CD4-positive, alpha-beta T cell (primary cell): ENCODE measurements at regions of chr16 and their contacts with region 1.

Region 1: DNA sequence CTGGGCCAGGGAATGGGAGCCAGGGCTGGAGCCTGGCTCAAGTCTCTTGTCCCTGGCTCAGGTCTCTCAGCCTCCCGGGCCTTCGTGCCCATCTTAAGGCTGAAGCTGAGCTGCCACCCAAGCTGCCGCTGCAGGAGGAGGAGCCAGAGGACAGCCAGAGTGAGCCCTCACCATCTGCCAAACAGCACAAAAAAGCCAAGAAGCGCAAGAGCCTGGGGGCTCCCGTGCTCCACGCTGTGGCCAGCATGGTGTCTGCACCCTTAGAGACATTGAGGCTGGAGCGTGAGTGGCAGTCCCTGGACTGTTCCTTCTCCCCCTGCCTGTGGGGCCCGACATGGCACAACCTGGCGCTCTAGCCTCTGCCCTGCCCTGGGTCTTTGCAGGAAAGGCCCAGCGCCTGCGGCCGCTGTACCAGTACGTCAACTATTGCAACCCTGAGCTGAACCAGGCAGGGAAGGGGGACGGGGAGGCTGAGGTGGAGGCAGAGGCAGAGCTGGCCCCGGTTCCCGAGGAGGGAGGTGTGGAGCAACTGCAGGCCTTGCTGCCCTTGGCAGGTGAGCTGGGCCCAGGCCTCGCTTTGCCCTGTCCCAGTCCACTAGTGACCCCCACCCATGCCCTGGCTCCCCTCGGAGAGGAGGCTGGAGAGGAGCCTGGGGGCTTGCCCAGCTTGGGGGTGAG is 1.3 kb downstream of the C16orf86 start:
- DNase-seq: peak; percentile 71 to 94 (median 81)
- ATAC-seq: peak; percentile 91
- H3K4me3 ChIP-seq: peak overlapping the region; percentile 65
- H3K4me3 Mint-ChIP-seq: peak overlapping the region; percentile 90
- H3K27ac ChIP-seq: peak overlapping the region; percentile 28 to 44
- H3K27ac Mint-ChIP-seq: peak overlapping the region; percentile 55
- H3K4me1 ChIP-seq: peaks cover 36% of the 10 kb centered on the region
- H3K4me1 Mint-ChIP-seq: peaks cover 28% of the 10 kb centered on the region
- H3K27me3 ChIP-seq: no peaks in the 10 kb centered on the region
- H3K27me3 Mint-ChIP-seq: no peaks in the 10 kb centered on the region
- CTCF ChIP-seq: peak; percentile 74

Region 2: DNA sequence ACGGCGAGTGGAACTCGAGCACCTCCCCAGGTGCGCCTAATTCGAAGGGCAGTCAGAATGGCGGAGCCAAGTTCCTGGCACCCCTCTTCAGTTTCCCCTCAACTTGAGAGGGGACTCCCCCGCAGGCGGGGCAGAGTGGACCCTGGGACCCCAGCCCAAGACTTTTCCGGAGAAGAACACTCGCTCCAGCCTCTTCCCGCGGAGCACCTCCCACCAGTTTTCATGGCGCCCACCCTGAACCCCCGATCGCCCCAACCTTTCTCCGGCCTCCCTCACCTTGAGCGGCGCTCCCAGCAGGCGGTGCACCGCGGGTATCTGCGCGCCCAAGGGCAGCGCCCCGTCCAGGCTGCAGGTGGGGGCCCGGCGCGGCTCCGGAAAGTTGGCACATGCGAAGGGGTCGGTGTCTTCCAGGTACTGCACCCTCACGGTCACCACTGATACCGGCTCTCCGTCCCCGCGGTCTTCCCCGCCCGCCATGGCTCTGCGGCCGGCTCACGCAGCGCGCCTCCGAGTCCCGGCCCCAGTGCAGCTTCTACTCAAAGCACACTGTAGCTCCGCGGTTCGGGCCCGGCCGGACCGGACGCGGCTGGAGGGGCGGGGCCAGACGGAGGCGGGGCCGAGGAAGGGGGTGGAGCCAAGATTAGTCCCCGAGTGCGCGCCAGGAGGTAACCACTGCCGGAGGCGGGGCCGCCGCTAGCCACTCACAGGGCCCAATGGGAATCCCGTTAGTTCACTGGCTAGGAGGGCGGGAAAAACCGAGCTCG is 420.8 kb before region 1 on chr16 and contains the start of gene FHOD1:
- CTCF ChIA-PET with region 1: no interaction called
- POLR2A ChIA-PET with region 1: no interaction called
- intact Hi-C with region 1: no loop called
- DNase-seq: peak; percentile 86 to 99 (median 96)
- ATAC-seq: peak; percentile 74
- H3K4me3 ChIP-seq: peak within 1 kb of the TSS; percentile 87
- H3K4me3 Mint-ChIP-seq: peak within 1 kb of the TSS; percentile 97
- H3K27ac ChIP-seq: peak within 1 kb of the TSS; percentile 65 to 74
- H3K27ac Mint-ChIP-seq: peak within 1 kb of the TSS; percentile 68
- H3K4me1 ChIP-seq: peaks cover 72% of the 10 kb centered on the region
- H3K4me1 Mint-ChIP-seq: peaks cover 42% of the 10 kb centered on the region
- H3K27me3 ChIP-seq: peaks cover 0 to 6% of the 10 kb centered on the region in 2 experiments
- H3K27me3 Mint-ChIP-seq: peaks cover 13% of the 10 kb centered on the region
- CTCF ChIP-seq: no peak
- total RNA-seq, gene FHOD1: 21.1 to 26.0 TPM

Region 3: DNA sequence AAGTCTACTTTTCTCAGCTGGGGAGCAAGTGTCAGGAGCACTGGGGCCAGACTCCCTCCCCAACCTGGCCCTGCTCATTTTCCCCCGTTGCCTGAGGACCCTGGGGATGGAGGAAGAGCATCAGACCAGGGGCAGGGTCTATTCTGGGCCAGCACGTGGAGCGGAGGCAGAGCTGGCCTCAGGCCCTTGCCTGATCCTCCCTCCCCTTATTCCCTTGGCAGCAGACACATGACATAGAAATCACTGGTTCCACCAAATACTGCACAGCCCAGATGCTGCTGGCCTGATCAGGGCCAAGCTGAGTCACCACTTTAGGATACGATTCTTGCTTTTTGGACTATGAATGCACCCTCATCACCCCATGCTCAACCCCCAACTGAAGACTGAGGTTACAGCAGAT is 168.8 kb before region 1 on chr16:
- CTCF ChIA-PET with region 1: no interaction called
- POLR2A ChIA-PET with region 1: no interaction called
- intact Hi-C with region 1: loop called in 1 of 2 experiments (anchors 1 kb)
- DNase-seq: no peak
- ATAC-seq: no peak
- H3K4me3 ChIP-seq: no peak overlapping the region
- H3K4me3 Mint-ChIP-seq: no peak overlapping the region
- H3K27ac ChIP-seq: no peak overlapping the region
- H3K27ac Mint-ChIP-seq: peak overlapping the region; percentile 32
- H3K4me1 ChIP-seq: peaks cover 14% of the 10 kb centered on the region
- H3K4me1 Mint-ChIP-seq: peaks cover 15% of the 10 kb centered on the region
- H3K27me3 ChIP-seq: no peaks in the 10 kb centered on the region
- H3K27me3 Mint-ChIP-seq: no peaks in the 10 kb centered on the region
- CTCF ChIP-seq: no peak

Region 4: DNA sequence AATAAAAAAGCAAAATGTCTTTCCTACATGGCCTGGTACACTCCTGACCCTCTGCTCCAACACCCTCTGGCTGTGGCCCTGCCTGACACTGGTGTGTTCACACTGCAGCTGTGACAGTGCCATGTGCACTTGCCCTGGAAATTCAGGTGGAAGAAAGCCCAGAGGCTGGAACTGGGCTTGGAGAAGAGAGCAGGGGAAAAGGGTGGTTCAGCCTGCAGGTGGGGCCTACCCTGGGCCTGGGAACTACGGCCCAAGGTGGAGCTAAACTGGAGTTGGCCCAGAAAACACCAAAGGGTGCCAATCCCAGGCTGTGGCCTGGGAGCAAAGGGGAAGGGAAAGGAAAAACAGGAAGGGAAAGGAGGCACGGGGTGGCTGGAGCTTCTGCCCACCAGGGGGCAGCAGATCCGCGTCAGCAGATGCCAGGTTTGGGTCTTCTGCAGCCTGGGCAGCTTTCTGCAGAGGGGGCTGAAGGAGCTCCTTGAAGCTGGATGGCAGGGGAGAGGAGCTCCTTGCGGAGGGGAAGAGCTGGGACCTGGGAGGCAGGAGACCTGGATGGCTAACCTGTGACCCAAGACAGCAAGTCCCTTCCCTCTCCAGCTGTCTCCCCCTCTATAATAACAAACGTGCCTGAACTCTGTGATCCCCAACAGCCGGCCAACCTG is 121.1 kb before region 1 on chr16:
- CTCF ChIA-PET with region 1: interaction called, 17 read pairs
- POLR2A ChIA-PET with region 1: interaction called, 26 read pairs
- intact Hi-C with region 1: loop called (anchors 1 to 2 kb)
- DNase-seq: peak; percentile 61 to 88 (median 72)
- ATAC-seq: peak; percentile 22
- H3K4me3 ChIP-seq: peak overlapping the region; percentile 44
- H3K4me3 Mint-ChIP-seq: peak overlapping the region; percentile 72
- H3K27ac ChIP-seq: peak overlapping the region; percentile 72 to 76
- H3K27ac Mint-ChIP-seq: peak overlapping the region; percentile 92
- H3K4me1 ChIP-seq: peaks cover 51% of the 10 kb centered on the region
- H3K4me1 Mint-ChIP-seq: peaks cover 50% of the 10 kb centered on the region
- H3K27me3 ChIP-seq: no peaks in the 10 kb centered on the region
- H3K27me3 Mint-ChIP-seq: no peaks in the 10 kb centered on the region
- CTCF ChIP-seq: peak; percentile 99

Region 5: DNA sequence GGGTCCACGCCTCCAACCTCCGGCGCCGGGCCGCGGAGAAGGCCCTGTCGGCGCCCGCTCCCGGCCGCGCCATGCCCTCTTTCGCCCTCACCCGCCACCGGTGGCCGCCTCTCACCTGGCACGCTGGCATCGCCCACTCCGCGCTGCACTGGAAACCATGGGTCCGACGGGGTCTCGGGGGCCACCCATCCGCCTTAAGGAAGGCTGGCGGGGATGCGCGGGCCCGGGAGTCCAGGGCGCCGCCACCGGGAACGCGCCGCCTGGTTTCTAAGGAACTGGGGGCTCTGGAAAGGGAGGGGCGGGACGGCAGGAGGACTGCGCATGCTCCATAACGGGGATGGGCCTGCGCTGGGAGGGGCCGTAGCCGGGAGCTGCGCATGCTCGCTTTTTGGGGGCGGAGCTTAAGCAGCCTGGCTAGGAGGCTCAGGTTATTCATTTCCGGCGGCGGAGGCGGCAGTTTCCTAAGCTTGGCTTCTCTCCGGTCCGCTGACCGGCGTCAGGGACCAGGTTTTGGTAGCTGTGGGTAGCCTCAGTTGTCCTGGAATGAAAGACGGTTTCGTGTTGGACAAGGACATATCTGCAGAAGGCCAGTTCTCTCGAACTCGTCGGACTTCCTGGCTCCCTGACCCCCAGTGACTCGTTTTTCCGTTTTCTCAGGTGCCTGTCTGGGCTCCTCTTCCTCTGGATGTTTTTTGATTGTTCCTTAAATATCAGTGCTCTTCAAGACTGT is 51.3 kb after region 1 on chr16 and contains the start of gene GFOD2:
- CTCF ChIA-PET with region 1: interaction called, 5 read pairs
- POLR2A ChIA-PET with region 1: interaction called, 4 read pairs
- intact Hi-C with region 1: loop called in 1 of 2 experiments (anchors 2 kb)
- DNase-seq: peak; percentile 96 to 100 (median 98)
- ATAC-seq: peak; percentile 94
- H3K4me3 ChIP-seq: peak within 1 kb of the TSS; percentile 76
- H3K4me3 Mint-ChIP-seq: peak within 1 kb of the TSS; percentile 97
- H3K27ac ChIP-seq: peak within 1 kb of the TSS; percentile 81 to 93
- H3K27ac Mint-ChIP-seq: peak within 1 kb of the TSS; percentile 93
- H3K4me1 ChIP-seq: peaks cover 26% of the 10 kb centered on the region
- H3K4me1 Mint-ChIP-seq: peaks cover 42% of the 10 kb centered on the region
- H3K27me3 ChIP-seq: no peaks in the 10 kb centered on the region
- H3K27me3 Mint-ChIP-seq: no peaks in the 10 kb centered on the region
- CTCF ChIP-seq: no peak
- total RNA-seq, gene GFOD2: 2.8 to 3.7 TPM

Region 6: DNA sequence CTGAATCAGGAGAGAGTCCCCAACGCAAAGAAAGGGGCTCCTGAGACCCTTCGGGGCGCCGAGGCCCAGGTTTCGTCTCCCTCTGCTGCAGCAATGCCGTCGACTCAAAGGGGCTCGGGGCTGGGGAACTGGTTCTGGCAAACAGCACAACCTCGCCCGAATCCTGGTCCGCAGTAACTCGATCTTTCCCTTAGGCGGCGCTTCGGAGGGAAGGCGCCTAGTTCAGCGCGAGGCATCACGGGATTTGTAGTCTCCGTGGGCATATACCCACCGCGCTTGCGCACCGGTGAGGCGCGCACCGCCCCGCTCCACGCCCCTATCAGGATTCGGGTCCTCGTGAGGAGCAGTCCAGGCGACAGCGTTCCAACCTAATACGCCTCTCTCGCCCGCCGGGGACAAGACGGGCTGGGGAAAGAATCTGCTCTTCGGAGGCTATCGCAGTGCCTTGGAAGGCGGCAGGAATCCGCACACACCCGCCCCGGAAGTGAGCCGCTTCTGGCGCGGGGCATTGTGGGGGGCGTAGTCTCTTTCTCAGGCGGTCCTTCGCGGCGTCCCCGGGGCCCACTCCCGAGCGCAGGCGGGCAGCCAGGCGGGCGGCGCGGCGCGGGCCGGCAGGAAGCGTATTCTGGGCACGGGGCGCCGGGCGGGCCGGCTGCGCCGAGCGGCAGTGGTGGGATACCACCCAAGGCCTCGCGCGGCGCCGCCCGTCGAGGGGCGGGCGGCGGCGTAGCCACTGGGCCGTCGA is 174.0 kb after region 1 on chr16 and contains the start of gene THAP11:
- CTCF ChIA-PET with region 1: no interaction called
- POLR2A ChIA-PET with region 1: no interaction called
- intact Hi-C with region 1: loop called in 1 of 2 experiments (anchors 5 kb)
- DNase-seq: peak; percentile 90 to 97 (median 94)
- ATAC-seq: peak; percentile 55
- H3K4me3 ChIP-seq: peak within 1 kb of the TSS; percentile 96
- H3K4me3 Mint-ChIP-seq: peak within 1 kb of the TSS; percentile 98
- H3K27ac ChIP-seq: peak within 1 kb of the TSS; percentile 87 to 99
- H3K27ac Mint-ChIP-seq: peak within 1 kb of the TSS; percentile 95
- H3K4me1 ChIP-seq: peaks cover 50% of the 10 kb centered on the region
- H3K4me1 Mint-ChIP-seq: peaks cover 42% of the 10 kb centered on the region
- H3K27me3 ChIP-seq: no peaks in the 10 kb centered on the region
- H3K27me3 Mint-ChIP-seq: no peaks in the 10 kb centered on the region
- CTCF ChIP-seq: peak; percentile 85
- total RNA-seq, gene THAP11: 31.2 to 32.1 TPM